Panc1 (cell line): ENCODE measurements at regions of chr21 and their contacts with region 1.

Region 1: DNA sequence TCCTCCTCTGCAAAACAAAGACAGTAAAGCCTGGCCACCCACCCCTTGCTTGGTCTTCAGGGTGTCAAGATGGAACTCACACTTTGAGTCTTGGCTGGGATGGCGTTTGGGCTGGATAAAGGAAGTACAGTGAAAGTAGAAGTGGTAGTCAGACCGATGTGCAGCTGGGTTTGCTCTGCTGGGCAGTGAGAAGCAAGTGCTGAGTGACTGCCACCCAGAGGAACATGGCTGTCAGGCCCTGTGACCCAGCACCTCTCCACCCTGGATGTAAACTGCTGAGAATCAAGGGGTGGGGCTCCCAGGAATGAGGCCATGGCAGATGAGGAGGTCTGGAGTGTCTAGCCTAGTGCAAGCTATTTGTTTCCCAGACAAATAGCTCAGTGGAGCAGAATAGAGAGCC is 51.2 kb downstream of the POFUT2 start:
- DNase-seq: no peak
- ATAC-seq: no peak
- H3K4me3 ChIP-seq: no peak overlapping the region
- H3K27ac ChIP-seq: no peak overlapping the region
- H3K4me1 ChIP-seq: no peaks in the 10 kb centered on the region
- H3K27me3 ChIP-seq: no peaks in the 10 kb centered on the region
- CTCF ChIP-seq: no peak

Region 2: DNA sequence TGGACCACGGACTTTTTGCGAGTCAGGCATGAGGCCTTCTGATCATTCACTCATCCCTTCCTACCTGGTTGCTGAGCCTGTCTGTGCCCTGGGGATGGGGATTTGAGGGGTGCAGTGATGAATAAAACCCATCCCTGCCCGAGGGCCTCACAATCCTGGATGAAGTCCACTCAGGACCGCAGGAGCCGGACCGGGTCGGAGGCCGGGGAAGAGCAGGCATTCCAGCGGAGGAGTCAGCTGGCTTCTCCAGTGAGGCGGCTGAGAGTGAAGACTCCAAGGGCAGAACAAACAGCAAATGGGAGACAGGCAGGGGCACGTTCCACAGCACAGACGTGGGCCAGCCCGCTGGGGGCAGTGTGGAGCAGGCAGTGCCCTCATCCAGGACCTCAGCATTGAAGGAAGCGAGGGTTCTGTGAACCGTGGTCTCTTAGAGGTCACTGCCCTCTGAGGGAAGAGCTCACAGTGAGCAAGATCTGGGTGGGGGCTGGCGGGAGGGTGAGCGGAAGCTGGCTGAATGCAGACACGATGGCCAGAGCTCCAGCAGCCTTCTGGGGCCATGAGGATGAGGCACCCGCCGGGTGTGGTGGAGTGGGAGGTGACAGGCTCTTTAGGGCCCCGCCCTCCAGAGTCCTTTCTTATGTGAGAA is 792.1 kb before region 1 on chr21:
- CTCF ChIA-PET with region 1: no interaction called
- POLR2A ChIA-PET with region 1: no interaction called
- in situ Hi-C with region 1: no loop called
- intact Hi-C with region 1: no loop called
- DNase-seq: no peak
- ATAC-seq: 0 out of 2 replicates have a peak, but pooled peaks have one; percentile 46
- H3K4me3 ChIP-seq: no peak overlapping the region
- H3K27ac ChIP-seq: no peak overlapping the region
- H3K4me1 ChIP-seq: no peaks in the 10 kb centered on the region
- H3K27me3 ChIP-seq: no peaks in the 10 kb centered on the region
- CTCF ChIP-seq: peak; percentile 52; the same call in 1 of the 2 replicates

Region 3: DNA sequence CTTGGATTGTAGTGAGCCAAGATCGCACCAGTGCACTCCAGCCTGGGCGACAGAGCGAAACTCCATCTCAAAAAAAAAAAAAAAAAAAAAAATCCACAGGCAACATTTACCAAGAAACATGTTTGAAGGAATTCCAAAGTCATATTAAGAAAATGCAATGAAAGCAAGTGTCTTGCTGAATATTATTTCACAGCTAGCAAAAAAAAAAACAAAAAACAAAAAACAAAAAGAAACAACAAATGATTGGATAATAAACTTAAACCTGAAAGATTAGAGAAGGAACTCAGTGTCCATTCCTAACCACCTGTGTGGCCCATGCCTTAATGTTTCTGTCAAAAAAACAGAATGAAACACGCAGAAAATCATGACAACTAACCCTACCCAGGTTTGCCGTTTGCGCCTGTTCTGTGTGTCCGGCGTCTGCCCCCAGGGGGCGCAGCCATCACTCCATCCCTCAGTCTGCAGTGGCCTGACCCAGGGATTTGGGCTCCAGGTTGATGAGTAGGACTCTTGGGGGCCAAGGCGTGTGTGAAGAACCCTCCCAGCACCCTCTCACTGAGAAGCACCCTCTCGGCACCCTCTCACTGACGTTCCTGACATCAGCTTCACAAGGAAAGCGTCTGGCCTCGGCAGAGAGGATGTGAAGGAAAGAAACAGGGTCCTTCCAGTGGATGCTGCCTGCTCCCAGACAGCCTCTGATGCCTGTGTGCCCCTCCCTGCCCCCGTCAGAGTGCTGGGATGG is 343.8 kb before region 1 on chr21:
- CTCF ChIA-PET with region 1: no interaction called
- POLR2A ChIA-PET with region 1: interaction called, 13 read pairs
- in situ Hi-C with region 1: no loop called
- intact Hi-C with region 1: no loop called
- DNase-seq: no peak
- ATAC-seq: peak; percentile 83
- H3K4me3 ChIP-seq: no peak overlapping the region
- H3K27ac ChIP-seq: no peak overlapping the region
- H3K4me1 ChIP-seq: no peaks in the 10 kb centered on the region
- H3K27me3 ChIP-seq: no peaks in the 10 kb centered on the region
- CTCF ChIP-seq: peak; percentile 92

Region 4: DNA sequence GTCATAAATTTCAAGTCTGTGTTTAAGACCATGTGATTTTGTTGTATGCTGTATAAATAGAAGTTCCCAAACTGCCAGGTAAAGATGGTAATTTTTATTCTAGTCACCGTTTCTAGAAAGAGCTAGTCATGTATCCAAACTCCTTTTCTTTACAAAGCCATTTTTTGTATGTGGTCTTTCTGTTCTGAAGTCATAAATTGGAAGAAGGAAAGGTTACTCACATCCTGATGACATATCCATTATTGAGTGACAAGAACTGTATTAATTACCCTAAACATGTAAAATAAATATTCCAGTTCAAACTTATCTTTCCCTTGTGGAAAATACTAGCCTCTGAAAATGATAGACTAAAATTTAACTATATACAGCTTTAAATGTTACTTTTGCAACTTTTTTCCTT is 53.5 kb before region 1 on chr21:
- CTCF ChIA-PET with region 1: no interaction called
- POLR2A ChIA-PET with region 1: interaction called, 10 read pairs
- in situ Hi-C with region 1: no loop called
- intact Hi-C with region 1: no loop called
- DNase-seq: no peak
- ATAC-seq: no peak
- H3K4me3 ChIP-seq: no peak overlapping the region
- H3K27ac ChIP-seq: no peak overlapping the region
- H3K4me1 ChIP-seq: no peaks in the 10 kb centered on the region
- H3K27me3 ChIP-seq: no peaks in the 10 kb centered on the region
- CTCF ChIP-seq: no peak